CD8-positive, alpha-beta T cell (primary cell): ENCODE measurements at regions of chr9 and their contacts with region 1.

Region 1: GRCh38 chr9:7799234-7799943 is at the start of gene DMAC1:
- DNase-seq: peak; percentile 44 to 87 (median 75)
- ATAC-seq: peak; percentile 90
- H3K4me3 ChIP-seq: peak within 1 kb of the TSS; percentile 89 to 100
- H3K4me3 Mint-ChIP-seq: peak within 1 kb of the TSS; percentile 95
- H3K27ac ChIP-seq: peak within 1 kb of the TSS; percentile 88 to 89
- H3K27ac Mint-ChIP-seq: peak within 1 kb of the TSS; percentile 97
- H3K4me1 ChIP-seq: peaks cover 16% of the 10 kb centered on the region
- H3K4me1 Mint-ChIP-seq: peaks cover 40% of the 10 kb centered on the region
- H3K27me3 ChIP-seq: no peaks in the 10 kb centered on the region
- H3K27me3 Mint-ChIP-seq: no peaks in the 10 kb centered on the region
- CTCF ChIP-seq: no peak
- total RNA-seq, gene DMAC1: 8.6 to 10.6 TPM

Region 2: GRCh38 chr9:6703898-6704639 is 1095.3 kb before region 1 on chr9:
- CTCF ChIA-PET with region 1: no interaction called
- POLR2A ChIA-PET with region 1: no interaction called
- intact Hi-C with region 1: loop called in 1 of 2 experiments (anchors 5 kb)
- DNase-seq: peak; percentile 61 to 94 (median 86)
- ATAC-seq: peak; percentile 82
- H3K4me3 ChIP-seq: peak overlapping the region; percentile 80 to 99
- H3K4me3 Mint-ChIP-seq: peak overlapping the region; percentile 100
- H3K27ac ChIP-seq: peak overlapping the region; percentile 94 to 96
- H3K27ac Mint-ChIP-seq: peak overlapping the region; percentile 100
- H3K4me1 ChIP-seq: peaks cover 10% of the 10 kb centered on the region
- H3K4me1 Mint-ChIP-seq: peaks cover 13% of the 10 kb centered on the region
- H3K27me3 ChIP-seq: no peaks in the 10 kb centered on the region
- H3K27me3 Mint-ChIP-seq: no peaks in the 10 kb centered on the region
- CTCF ChIP-seq: no peak

Region 3: DNA sequence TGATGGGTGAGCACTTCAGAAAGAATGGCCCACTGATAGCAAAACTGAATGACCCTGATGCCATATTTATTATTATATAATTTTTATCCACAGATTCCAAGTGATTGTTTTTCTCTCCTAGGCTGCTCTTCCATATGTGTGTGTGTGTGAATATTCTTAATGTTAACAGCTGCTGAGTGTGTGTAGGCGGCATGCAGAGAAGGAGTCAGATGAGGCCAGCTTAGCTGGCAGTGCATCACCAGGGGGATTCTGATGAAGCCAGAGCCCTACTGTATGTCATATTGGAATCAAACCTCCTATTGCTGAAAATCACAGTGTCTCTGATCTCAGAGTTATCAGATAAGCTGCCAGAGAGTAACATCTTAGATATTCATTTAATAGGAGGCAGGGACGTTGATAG is 176.9 kb before region 1 on chr9:
- CTCF ChIA-PET with region 1: no interaction called
- POLR2A ChIA-PET with region 1: no interaction called
- intact Hi-C with region 1: loop called in 1 of 2 experiments (anchors 2 kb)
- DNase-seq: no peak
- ATAC-seq: no peak
- H3K4me3 ChIP-seq: no peak overlapping the region
- H3K4me3 Mint-ChIP-seq: no peak overlapping the region
- H3K27ac ChIP-seq: no peak overlapping the region
- H3K27ac Mint-ChIP-seq: no peak overlapping the region
- H3K4me1 ChIP-seq: peaks cover 15% of the 10 kb centered on the region
- H3K4me1 Mint-ChIP-seq: peaks cover 23% of the 10 kb centered on the region
- H3K27me3 ChIP-seq: no peaks in the 10 kb centered on the region
- H3K27me3 Mint-ChIP-seq: no peaks in the 10 kb centered on the region
- CTCF ChIP-seq: no peak

Region 4: DNA sequence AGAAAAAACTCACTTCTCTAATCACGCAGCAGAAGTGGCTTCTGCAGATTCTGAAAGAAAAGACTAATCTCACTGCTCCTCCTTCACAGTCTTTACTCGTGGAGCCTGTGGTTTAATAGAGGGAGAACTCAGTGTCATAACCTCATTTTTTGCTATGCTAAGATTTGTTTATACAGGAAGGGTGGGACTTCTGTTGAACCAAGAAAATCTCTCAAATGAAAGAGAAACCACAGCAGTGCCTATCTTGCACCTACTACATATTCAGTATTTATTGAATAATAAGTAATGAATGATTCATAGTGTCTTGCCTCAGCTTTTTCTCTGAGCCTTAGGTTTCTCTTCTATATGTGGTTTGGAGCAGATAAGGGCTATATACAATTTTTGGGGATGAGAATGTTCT is 136.3 kb after region 1 on chr9:
- CTCF ChIA-PET with region 1: no interaction called
- POLR2A ChIA-PET with region 1: no interaction called
- intact Hi-C with region 1: loop called (anchors 2 to 10 kb)
- DNase-seq: peak in 3 of 9 experiments; percentile 9 to 79 (median 59)
- ATAC-seq: peak; percentile 97
- H3K4me3 ChIP-seq: peak overlapping the region in 1 of 2 experiments; percentile 7
- H3K4me3 Mint-ChIP-seq: peak overlapping the region; percentile 69
- H3K27ac ChIP-seq: peak overlapping the region; percentile 34 to 51
- H3K27ac Mint-ChIP-seq: peak overlapping the region; percentile 95
- H3K4me1 ChIP-seq: peaks cover 25% of the 10 kb centered on the region
- H3K4me1 Mint-ChIP-seq: peaks cover 35% of the 10 kb centered on the region
- H3K27me3 ChIP-seq: no peaks in the 10 kb centered on the region
- H3K27me3 Mint-ChIP-seq: no peaks in the 10 kb centered on the region
- CTCF ChIP-seq: no peak

Region 5: DNA sequence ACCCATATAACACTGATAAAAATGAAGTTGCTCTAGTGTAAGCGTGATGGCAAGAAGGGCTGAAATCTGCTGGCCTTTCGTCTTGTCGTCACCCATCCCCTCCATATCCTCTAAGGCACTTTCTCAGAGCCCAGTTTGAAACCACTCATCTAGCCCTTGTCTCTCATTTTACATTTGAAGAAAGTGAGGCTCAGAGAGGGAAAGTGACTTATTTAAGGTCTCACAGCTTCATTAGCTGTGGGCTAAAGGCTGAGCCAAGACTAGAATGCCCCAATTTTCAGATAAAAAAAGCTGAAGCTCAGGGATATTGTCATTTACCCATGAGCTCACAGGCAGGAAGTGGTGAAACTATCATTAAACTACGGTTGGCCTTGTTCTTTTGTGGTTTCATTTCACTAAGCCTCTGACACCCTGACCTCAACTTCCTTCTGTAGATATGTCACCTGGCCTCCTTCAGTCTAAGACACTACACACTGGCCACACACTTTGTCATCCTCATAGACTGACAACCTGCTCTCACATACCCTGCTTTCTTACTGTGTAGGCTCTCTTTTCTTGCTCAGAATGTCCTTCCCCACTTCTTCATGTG is 176.9 kb after region 1 on chr9:
- CTCF ChIA-PET with region 1: no interaction called
- POLR2A ChIA-PET with region 1: no interaction called
- intact Hi-C with region 1: loop called (anchors 1 to 2 kb)
- DNase-seq: peak; percentile 18 to 94 (median 56)
- ATAC-seq: peak; percentile 98
- H3K4me3 ChIP-seq: no peak overlapping the region
- H3K4me3 Mint-ChIP-seq: peak overlapping the region; percentile 54
- H3K27ac ChIP-seq: peak overlapping the region in 1 of 2 experiments; percentile 64
- H3K27ac Mint-ChIP-seq: peak overlapping the region; percentile 86
- H3K4me1 ChIP-seq: peaks cover 53% of the 10 kb centered on the region
- H3K4me1 Mint-ChIP-seq: peaks cover 61% of the 10 kb centered on the region
- H3K27me3 ChIP-seq: no peaks in the 10 kb centered on the region
- H3K27me3 Mint-ChIP-seq: no peaks in the 10 kb centered on the region
- CTCF ChIP-seq: no peak